ENCODE measurements at regions of chr7 and their contacts with region 1.

Region 1: DNA sequence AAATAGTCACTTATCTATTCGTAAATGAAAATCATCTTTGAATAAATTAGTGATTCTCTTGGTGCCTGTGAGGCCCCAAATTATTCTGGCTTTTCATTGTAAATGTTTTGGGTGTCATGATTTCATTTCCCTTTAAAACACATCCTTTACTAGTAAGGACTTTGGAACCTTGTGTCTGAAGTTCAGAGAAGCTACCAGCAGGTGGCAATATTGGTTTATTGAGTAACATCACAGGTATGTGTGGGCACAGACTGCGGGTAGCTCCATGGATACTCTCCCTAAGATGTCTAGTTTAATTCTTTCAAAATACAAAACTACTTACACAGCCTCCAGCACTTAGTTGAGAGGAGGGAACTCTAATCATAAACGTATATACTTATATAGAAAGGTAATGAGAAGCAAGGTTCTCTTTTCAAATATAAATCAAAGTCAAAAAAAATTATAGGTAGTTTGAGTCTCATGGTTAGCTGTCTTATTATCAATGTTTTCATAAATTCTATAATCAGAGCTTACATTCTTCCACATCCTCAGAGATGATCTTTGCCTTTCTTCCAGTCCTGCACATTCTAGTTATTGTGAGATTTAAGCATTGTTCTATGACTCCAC is 449.6 kb downstream of the GRM8 start:
- DNase-seq: peak in 3 of 6 donors; percentile 30 to 57 (median 35)
- ATAC-seq: peak; percentile 73 to 90 (median 88)
- H3K4me3 ChIP-seq: no peak overlapping the region
- H3K27ac ChIP-seq: no peak overlapping the region
- H3K4me1 ChIP-seq: no peaks in the 10 kb centered on the region
- H3K27me3 ChIP-seq: no peaks in the 10 kb centered on the region
- CTCF ChIP-seq: peak; percentile 21 to 61 (median 52)

Region 2: DNA sequence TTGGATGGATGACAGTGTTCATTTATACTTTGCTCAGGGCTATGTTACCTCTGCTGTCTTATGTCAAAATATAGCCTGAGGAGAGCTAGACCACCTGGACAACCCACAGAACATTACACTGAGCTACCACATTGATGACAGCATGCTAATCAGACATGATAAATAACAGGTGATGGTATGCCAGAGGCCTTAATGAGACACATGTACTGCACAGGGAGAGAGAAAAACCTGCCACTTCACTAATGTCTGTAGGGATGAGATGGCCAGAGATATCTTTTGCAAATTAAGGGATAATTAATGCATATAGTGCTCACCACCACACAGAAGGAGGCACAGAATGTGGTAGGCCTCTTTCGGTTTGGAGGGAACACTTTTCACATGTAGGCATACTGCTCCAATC is 750.9 kb before region 1 on chr7:
- intact Hi-C with region 1: no loop called
- DNase-seq: no peak
- ATAC-seq: no peak
- H3K4me3 ChIP-seq: no peak overlapping the region
- H3K27ac ChIP-seq: no peak overlapping the region
- H3K4me1 ChIP-seq: no peaks in the 10 kb centered on the region
- H3K27me3 ChIP-seq: no peaks in the 10 kb centered on the region
- CTCF ChIP-seq: no peak

Region 3: DNA sequence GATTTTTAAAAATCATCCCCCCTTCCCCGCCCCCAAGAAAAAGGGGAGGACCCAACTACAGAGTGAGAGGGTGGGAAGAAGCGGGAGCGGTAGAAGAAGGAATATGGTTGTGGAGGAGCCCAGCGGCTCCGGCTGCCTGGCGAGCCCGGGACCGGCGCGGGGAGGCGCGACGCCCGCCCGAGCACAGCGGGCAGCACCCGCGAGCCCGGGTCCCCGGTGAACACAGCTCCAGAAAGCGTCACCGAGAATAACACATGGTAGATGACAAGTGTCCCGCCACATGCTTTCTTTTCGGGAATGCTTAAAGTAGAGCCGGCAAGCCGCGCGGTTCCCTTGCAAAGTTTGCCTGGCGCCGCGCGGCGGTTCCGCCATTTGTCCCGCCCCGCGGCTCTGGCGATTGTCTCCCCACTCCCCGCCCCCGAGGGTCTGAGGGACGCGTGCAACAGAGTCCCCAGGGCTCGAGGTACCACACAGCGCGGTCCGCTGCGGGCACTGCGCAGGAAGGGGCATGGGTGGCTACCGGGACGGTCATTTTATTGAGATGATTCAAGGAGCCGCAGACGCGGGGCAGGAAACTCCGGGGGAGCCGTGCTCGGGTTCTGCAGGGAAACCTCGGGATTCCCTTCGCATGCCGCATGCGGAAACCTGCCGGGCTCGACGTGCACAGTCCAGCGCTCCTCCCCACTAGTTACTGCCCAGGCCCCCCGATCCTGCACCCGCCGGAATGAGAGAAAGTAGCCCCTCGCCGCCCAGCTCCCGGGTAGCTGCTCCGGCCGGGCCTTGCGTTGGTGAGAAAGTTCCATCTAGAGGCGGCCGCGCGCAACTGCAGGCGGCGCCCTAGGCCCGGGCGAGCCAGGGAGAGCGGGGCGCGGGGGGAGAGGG is 450.4 kb after region 1 on chr7:
- intact Hi-C with region 1: loop called in 1 of 3 experiments (anchors 10 kb)
- DNase-seq: peak; percentile 45 to 90 (median 64)
- ATAC-seq: peak; percentile 84 to 91 (median 88)
- H3K4me3 ChIP-seq: peak overlapping the region; percentile 46 to 66 (median 52)
- H3K27ac ChIP-seq: peak overlapping the region in 2 of 4 donors; percentile 9 to 26
- H3K4me1 ChIP-seq: peaks cover 0 to 5% (median 5%) of the 10 kb centered on the region in 3 donors
- H3K27me3 ChIP-seq: no peaks in the 10 kb centered on the region
- CTCF ChIP-seq: peak; percentile 82 to 95 (median 90)